SK-N-SH (cell line): ENCODE measurements at regions of chr11 and their contacts with region 1.

Region 1: DNA sequence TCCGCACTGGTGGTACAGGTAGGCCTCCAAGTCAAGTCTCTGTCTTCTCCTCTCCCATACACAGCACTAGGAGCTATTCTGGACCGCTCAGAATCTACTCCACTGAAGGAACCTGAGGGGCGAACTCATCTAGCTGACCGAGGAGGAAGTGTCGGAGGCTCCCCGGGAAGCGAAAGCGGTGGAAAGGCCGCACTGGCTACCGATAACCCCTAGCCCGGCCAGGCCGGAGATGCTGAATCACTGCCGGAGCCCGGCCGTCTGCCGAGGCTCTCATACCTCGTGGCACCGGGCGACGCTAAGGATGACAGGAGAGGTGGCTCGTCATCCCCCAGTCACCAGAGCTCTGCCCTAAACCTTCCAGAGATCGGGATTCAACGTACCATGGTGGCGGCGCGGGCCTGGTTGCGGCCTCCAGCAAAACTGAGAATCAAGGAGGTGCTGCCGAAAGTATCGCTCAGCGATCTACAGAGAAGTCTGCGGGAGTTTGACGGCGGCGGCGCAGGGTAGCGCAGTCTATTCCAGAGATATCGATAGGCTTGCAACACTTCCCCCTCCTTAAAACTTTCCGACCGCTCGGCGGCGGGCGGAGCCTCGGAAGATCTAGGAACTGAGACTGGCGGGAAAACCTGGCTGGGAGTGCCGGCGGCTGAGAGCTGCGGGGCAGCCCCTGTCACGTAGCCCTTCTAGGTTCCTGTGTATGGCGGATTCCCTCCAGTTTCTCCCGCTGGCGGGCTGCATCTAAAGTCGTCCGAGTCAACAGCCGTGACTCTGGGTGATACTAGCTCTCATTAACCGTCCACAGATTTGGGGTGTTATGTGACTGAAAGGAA is at the start of gene PSMA1:
- DNase-seq: peak; percentile 85
- H3K4me3 ChIP-seq: peak within 1 kb of the TSS; percentile 81 to 85
- H3K27ac ChIP-seq: peak within 1 kb of the TSS; percentile 89 to 92
- H3K4me1 ChIP-seq: peaks cover 0 to 4% of the 10 kb centered on the region in 2 experiments; a peak in 2 of 4 replicates
- H3K27me3 ChIP-seq: no peaks in the 10 kb centered on the region
- CTCF ChIP-seq: 0 out of 2 replicates have a peak, but pooled peaks have one; percentile 9
- EP300 ChIP-seq: peak in 1 of 2 experiments; percentile 55; a peak in 1 of 4 replicates
- RAD21 ChIP-seq: no peak
- polyA plus RNA-seq, gene PSMA1: 166 and 226 TPM in 2 replicates

Region 2: DNA sequence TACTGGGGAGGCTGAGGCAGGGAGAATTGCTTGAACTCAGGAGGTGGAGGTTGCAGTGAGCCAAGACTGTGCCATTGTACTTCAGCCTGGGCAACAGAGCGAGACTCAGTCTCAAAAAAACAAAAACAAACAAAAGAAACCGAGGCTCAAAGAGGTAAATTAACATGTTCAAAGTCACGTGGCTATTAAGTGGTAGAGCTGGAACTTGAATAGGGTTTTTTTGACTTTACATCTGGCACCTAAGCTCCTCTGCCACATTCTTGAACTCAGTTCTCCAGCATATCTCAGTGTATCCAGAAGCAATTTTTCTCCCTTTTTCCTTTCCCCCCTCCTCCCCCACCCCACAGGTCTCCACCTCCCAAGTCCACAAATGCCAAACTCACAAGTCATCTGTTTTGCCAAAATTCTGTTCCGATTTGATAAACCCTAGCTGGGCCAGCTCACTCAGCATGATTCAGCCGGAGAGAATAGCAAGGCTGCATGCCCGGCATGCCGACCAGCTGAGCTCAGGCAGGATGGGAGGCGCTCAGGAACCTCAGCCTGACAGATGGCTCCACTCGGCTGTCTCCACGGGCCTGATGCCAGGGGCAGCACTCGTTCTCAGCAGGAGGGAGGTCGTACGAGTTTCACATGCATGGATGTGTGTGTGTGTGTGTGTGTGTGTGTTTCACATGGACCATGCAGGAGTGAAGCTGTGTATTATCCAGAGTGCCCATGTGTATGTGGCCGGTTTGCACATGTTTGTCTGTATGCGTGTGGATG is 97.9 kb before region 1 on chr11:
- CTCF ChIA-PET with region 1: no interaction called
- POLR2A ChIA-PET with region 1: no interaction called
- DNase-seq: peak; percentile 69
- H3K4me3 ChIP-seq: no peak overlapping the region
- H3K27ac ChIP-seq: peak overlapping the region in 1 of 2 experiments; percentile 82; a peak in 3 of 4 replicates
- H3K4me1 ChIP-seq: peaks cover 9 to 36% of the 10 kb centered on the region in 2 experiments; a peak in 3 of 4 replicates
- H3K27me3 ChIP-seq: no peaks in the 10 kb centered on the region
- CTCF ChIP-seq: no peak
- EP300 ChIP-seq: peak; percentile 27 to 99; a peak in 3 of 4 replicates
- RAD21 ChIP-seq: no peak

Region 3: GRCh38 chr11:14892036-14892567 is 372.0 kb after region 1 on chr11 and contains the start of gene CYP2R1:
- CTCF ChIA-PET with region 1: no interaction called
- POLR2A ChIA-PET with region 1: interaction called, 12 read pairs
- DNase-seq: peak; percentile 96
- H3K4me3 ChIP-seq: peak within 1 kb of the TSS; percentile 75 to 88
- H3K27ac ChIP-seq: peak within 1 kb of the TSS; percentile 80 to 87
- H3K4me1 ChIP-seq: no peaks in the 10 kb centered on the region; a peak in 2 of 4 replicates
- H3K27me3 ChIP-seq: no peaks in the 10 kb centered on the region
- CTCF ChIP-seq: no peak
- EP300 ChIP-seq: no peak
- RAD21 ChIP-seq: no peak; the same call in 1 of the 2 replicates
- polyA plus RNA-seq, gene CYP2R1: 9.3 and 10.9 TPM in 2 replicates